ENCODE measurements at regions of chr1 and their contacts with region 1.

Region 1: GRCh38 chr1:42924082-42924850 is 34.4 kb downstream of the SLC2A1 start:
- DNase-seq: peak; percentile 81 to 96
- H3K4me3 ChIP-seq: peak overlapping the region; percentile 63
- H3K27ac ChIP-seq: peak overlapping the region; percentile 57
- H3K4me1 ChIP-seq: peaks cover 20% of the 10 kb centered on the region
- H3K27me3 ChIP-seq: no peaks in the 10 kb centered on the region
- CTCF ChIP-seq: no peak

Region 2: GRCh38 chr1:42838482-42839190 is 85.6 kb before region 1 on chr1:
- CTCF ChIA-PET with region 1: no interaction called
- POLR2A ChIA-PET with region 1: no interaction called
- intact Hi-C with region 1: no loop called
- DNase-seq: no peak
- H3K4me3 ChIP-seq: no peak overlapping the region
- H3K27ac ChIP-seq: no peak overlapping the region
- H3K4me1 ChIP-seq: no peaks in the 10 kb centered on the region
- H3K27me3 ChIP-seq: no peaks in the 10 kb centered on the region
- CTCF ChIP-seq: no peak

Region 3: DNA sequence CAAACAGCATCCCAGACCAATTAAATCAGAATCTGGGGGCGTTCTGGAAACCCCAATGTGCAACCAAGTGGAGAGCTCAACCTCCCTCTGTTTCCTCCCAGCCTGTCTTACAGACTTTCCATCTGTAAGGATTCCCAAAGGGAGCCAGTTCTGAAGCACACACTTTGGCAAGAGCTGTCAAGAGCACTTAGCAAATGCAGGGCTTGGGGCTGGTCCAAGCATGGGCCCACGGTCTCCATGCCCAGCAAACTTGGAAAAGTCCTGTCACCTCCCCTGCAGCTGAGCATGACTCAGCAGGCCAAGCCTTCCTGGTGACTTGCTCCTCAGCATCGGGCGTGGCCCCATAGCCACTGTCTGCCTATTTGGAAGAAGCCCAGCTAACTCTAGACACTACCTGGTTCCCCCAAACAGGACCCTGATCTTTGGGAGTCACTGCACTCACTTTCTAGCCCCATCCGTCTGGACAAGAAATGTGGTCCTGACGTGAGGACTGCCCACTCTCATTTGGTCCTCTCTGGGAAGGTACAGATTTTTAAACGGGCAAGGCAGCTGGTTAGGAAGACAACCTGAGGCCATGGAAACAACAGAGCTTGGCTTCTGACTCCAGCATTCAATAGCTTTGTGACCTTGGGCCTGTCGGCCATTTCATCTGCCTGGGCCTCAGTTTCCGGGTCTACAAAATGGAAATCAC is 17.5 kb after region 1 on chr1:
- CTCF ChIA-PET with region 1: no interaction called
- POLR2A ChIA-PET with region 1: interaction called, 3 read pairs
- intact Hi-C with region 1: loop called (anchors 2 kb)
- DNase-seq: peak; percentile 92 to 93
- H3K4me3 ChIP-seq: peak overlapping the region; percentile 28; the same call in 1 of the 2 replicates
- H3K27ac ChIP-seq: peak overlapping the region; percentile 99
- H3K4me1 ChIP-seq: peaks cover 98% of the 10 kb centered on the region
- H3K27me3 ChIP-seq: no peaks in the 10 kb centered on the region
- CTCF ChIP-seq: no peak

Region 4: DNA sequence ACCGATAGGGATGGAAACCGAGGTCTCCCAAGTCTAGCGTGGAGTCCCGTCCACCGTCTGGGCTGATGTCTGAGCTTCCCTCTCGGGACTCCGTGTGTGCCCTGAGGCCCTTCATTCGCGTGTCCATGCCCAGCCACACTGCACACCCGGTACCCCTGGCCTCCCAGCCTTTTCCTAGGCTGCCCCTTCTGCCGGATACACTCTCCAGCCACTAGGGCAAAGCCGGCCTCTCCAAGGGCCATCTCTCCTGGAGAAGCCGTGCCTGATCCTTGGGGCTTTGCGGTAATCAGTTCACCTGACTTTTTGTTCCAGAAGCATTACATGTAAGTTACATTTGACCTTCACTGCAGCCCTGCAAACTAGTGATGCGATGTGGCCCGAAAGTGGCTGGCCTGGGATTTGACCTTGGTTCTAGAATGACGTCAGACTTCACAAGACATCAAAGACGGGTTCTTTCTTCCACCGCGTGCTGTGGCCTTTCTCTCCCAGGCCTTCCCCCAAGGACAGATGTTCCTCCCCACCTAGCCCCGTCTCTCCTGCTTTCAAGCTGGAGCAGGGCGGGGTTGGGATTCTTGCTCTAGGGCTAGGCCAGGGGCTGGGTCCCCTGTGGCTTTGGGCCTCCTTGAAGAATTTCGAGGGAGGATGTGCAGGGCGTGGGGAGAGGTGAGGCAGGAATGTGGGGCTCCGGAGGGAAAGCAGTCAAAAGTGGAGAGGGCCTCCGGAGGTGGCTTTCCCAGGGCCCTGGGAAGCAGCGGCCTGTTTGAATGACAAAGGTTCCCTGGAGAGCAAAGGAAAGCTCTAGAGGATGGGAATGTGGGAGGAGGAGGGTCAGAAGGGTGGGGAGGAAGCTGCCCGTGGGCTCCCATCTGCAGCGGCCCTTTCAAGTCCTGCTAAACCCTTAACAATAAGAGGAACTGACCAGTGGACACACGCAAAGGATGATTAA is 84.1 kb after region 1 on chr1:
- CTCF ChIA-PET with region 1: interaction called, 3 read pairs
- POLR2A ChIA-PET with region 1: no interaction called
- intact Hi-C with region 1: loop called (anchors 5 kb)
- DNase-seq: peak in 1 of 2 experiments; percentile 74
- H3K4me3 ChIP-seq: no peak overlapping the region
- H3K27ac ChIP-seq: no peak overlapping the region
- H3K4me1 ChIP-seq: peaks cover 22% of the 10 kb centered on the region
- H3K27me3 ChIP-seq: no peaks in the 10 kb centered on the region
- CTCF ChIP-seq: no peak

Region 5: DNA sequence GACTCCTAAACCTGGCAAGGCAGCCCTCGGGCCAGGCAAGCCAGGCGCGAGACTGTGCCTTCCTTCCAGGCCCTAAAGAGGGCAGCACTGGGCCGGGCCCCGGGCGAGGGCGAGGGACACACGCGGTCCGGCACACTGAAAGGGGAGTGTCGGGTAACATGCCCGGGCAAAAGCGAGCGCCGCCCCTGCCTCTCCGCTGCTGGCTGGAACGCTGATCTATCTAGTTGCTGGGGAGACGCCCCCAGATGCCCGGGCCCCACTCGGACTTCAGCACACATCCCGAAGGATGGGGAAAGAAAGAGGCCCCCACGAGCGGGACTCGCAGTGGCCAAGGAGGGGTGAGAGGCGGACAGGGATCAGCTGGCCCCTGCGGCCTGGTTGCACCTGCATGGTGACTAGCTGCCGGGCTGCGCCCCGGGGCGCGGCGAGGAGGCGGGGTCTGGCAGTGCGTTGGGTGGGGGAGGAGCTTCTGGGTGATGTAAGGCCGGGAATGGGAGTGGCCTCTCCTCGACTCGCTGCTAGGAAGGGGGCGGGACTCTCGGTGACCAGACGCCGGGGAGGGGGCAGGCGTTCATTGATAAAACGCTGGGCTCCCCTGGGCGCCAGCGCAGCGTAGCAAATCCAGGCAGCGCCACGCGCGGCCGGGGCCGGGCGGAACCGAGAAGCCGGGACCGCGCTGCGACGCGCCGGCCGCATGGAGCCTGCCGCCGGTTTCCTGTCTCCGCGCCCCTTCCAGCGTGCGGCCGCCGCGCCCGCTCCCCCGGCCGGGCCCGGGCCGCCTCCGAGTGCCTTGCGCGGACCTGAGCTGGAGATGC is 1875.7 kb after region 1 on chr1 and contains the start of gene PLK3:
- CTCF ChIA-PET with region 1: no interaction called
- POLR2A ChIA-PET with region 1: no interaction called
- intact Hi-C with region 1: no loop called
- DNase-seq: peak; percentile 88 to 99
- H3K4me3 ChIP-seq: peak within 1 kb of the TSS; percentile 82
- H3K27ac ChIP-seq: peak within 1 kb of the TSS; percentile 81
- H3K4me1 ChIP-seq: peaks cover 45% of the 10 kb centered on the region
- H3K27me3 ChIP-seq: no peaks in the 10 kb centered on the region
- CTCF ChIP-seq: peak; percentile 88
- total RNA-seq, gene PLK3: 12.7 and 13.0 TPM in 2 replicates